CD4-positive, alpha-beta T cell (primary cell): ENCODE measurements at regions of chr11 and their contacts with region 1.

Region 1: DNA sequence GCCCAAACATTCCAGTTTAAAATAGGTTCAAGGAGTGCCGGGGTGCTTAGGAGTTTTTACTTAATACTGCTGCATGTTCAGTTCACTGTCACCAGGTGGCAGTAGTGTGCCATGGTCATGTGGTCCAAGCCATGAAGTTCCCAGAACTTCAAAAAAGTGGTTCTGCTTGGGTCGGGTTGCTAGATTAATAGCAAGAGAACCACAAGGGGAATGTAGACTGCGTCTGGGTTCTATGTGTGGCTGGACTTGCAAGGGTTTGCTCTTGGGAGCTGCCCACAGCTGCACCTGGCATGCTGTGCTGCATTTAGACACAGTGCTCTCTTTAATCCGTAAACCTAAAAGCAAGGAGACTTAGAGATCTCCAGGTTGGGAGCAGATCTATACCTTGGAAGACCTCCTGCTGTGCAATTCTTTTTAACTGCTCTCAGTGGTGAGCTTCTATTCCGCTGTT is 6.5 kb upstream of the SPON1 start:
- DNase-seq: peak; percentile 32 to 89 (median 52)
- ATAC-seq: peak; percentile 77
- H3K4me3 ChIP-seq: no peak overlapping the region
- H3K4me3 Mint-ChIP-seq: no peak overlapping the region
- H3K27ac ChIP-seq: no peak overlapping the region
- H3K27ac Mint-ChIP-seq: no peak overlapping the region
- H3K4me1 ChIP-seq: peaks cover 10% of the 10 kb centered on the region
- H3K4me1 Mint-ChIP-seq: no peaks in the 10 kb centered on the region
- H3K27me3 ChIP-seq: peaks cover 3 to 4% of the 10 kb centered on the region in 2 experiments
- H3K27me3 Mint-ChIP-seq: peaks cover 26% of the 10 kb centered on the region
- CTCF ChIP-seq: peak; percentile 86

Region 2: DNA sequence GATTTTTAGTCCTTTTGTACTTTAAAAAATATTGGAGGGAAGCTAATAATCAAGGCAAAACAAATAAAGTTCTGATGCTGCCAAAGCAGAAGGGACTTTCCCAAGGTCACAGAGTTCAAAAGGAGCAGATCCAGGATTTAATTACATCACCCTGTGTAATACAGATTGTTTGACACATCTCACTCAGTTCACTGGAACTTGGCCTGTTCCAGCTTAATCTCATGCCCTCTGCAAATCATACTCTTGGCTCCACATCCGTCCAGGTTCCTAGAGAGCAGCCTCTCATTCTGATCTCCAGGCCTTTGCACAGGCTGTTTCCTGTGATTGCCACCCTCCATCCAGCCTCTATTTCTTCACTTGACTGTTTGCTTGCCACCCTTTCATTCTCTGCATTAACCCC is 158.3 kb after region 1 on chr11:
- CTCF ChIA-PET with region 1: no interaction called
- POLR2A ChIA-PET with region 1: no interaction called
- intact Hi-C with region 1: no loop called
- DNase-seq: peak in 1 of 14 experiments; percentile 10
- ATAC-seq: no peak
- H3K4me3 ChIP-seq: no peak overlapping the region
- H3K4me3 Mint-ChIP-seq: no peak overlapping the region
- H3K27ac ChIP-seq: no peak overlapping the region
- H3K27ac Mint-ChIP-seq: no peak overlapping the region
- H3K4me1 ChIP-seq: peaks cover under 1% of the 10 kb centered on the region
- H3K4me1 Mint-ChIP-seq: peaks cover 12% of the 10 kb centered on the region
- H3K27me3 ChIP-seq: no peaks in the 10 kb centered on the region
- H3K27me3 Mint-ChIP-seq: no peaks in the 10 kb centered on the region
- CTCF ChIP-seq: no peak

Region 3: GRCh38 chr11:14148653-14149273 is 192.8 kb after region 1 on chr11:
- CTCF ChIA-PET with region 1: interaction called, 31 read pairs
- POLR2A ChIA-PET with region 1: interaction called, 5 read pairs
- intact Hi-C with region 1: loop called (anchors 1 kb)
- DNase-seq: peak in 3 of 14 experiments; percentile 56 to 64 (median 63)
- ATAC-seq: peak; percentile 97
- H3K4me3 ChIP-seq: no peak overlapping the region
- H3K4me3 Mint-ChIP-seq: no peak overlapping the region
- H3K27ac ChIP-seq: no peak overlapping the region
- H3K27ac Mint-ChIP-seq: no peak overlapping the region
- H3K4me1 ChIP-seq: no peaks in the 10 kb centered on the region
- H3K4me1 Mint-ChIP-seq: peaks cover 5% of the 10 kb centered on the region
- H3K27me3 ChIP-seq: no peaks in the 10 kb centered on the region
- H3K27me3 Mint-ChIP-seq: no peaks in the 10 kb centered on the region
- CTCF ChIP-seq: peak; percentile 68